Right lobe of liver (tissue), 6 donors: ENCODE measurements at regions of chr2 and their contacts with region 1.

Region 1: DNA sequence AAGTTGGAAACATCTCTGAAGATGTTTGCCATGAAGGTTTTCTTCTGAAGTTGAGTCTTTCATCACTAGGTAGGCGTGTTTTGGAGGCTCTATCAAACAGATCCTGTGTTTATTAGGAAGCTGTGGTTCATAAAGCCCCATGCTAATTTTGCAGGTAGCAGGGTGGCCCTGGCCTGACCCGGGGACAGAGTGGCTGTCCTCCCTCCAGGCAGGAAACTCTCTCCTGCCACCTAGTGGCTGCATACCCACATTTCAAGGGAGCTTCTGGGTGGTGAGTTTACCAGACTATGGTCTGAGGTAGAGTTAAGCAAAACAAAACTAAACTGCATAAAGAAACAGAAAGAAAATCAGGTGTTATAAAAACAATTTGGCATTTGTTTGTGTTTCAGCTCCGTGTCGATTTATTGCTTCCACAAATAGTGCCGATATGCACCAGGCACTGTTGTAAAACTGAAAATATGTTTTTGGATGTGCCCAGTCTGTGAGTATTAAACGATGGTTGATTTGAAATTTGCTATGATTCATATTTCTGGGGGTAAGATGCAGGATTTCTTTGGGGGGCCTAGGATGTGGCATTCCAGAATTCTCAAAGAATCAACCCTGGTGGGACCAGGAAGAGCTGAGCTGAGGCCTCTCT is 26.0 kb upstream of the IL37 start:
- DNase-seq: peak; percentile 69 to 82 (median 72)
- ATAC-seq: peak; percentile 98 to 99 (median 99)
- H3K4me3 ChIP-seq: no peak overlapping the region
- H3K27ac ChIP-seq: no peak overlapping the region
- H3K4me1 ChIP-seq: peaks cover 0 to 5% (median 0%) of the 10 kb centered on the region in 4 donors
- H3K27me3 ChIP-seq: no peaks in the 10 kb centered on the region
- CTCF ChIP-seq: peak; percentile 91 to 96 (median 94)
- POLR2A ChIP-seq: no peak

Region 2: DNA sequence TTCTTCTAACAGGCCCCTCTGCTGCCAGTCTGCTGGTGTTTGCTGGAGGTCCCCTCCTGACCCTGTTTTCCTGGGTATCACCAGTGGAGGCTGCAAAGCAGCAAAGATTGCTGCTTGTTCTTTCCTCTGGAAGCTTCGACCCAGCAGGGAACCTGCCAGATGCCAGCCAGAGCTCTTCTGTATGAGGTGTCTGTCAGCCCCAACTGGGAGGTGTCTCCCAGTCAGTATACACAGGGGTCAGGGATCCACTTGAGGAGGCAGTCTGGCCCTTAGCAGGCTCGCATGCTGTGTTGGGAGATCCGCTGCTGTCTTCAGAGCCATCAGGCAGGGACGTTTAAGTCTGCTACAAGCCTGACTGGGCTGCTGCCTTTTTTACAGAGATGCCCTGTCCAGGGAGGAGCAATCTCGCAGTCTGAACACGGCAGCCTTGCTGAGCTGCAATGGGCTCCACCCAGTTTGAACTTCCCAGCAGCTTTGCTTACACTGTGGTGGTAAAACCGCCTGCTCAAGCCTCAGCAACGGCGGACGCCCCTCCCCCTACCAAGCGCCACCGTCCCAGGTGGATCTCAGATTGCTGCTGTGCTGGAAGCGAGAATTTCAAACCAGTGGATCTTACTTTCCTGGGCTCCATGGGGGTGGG is 270.7 kb before region 1 on chr2:
- intact Hi-C with region 1: no loop called
- DNase-seq: no peak
- ATAC-seq: no peak
- H3K4me3 ChIP-seq: no peak overlapping the region
- H3K27ac ChIP-seq: no peak overlapping the region
- H3K4me1 ChIP-seq: peaks cover 0 to 8% (median 0%) of the 10 kb centered on the region in 4 donors
- H3K27me3 ChIP-seq: no peaks in the 10 kb centered on the region
- CTCF ChIP-seq: no peak
- POLR2A ChIP-seq: no peak

Region 3: GRCh38 chr2:112740527-112740926 is 144.5 kb before region 1 on chr2:
- intact Hi-C with region 1: loop called (anchors 5 to 10 kb)
- DNase-seq: no peak
- ATAC-seq: no peak
- H3K4me3 ChIP-seq: no peak overlapping the region
- H3K27ac ChIP-seq: no peak overlapping the region
- H3K4me1 ChIP-seq: no peaks in the 10 kb centered on the region
- H3K27me3 ChIP-seq: no peaks in the 10 kb centered on the region
- CTCF ChIP-seq: no peak
- POLR2A ChIP-seq: no peak

Region 4: GRCh38 chr2:112749755-112750559 is 135.0 kb before region 1 on chr2:
- intact Hi-C with region 1: loop called in 1 of 2 experiments (anchors 10 kb)
- DNase-seq: peak; percentile 85 to 89 (median 88)
- ATAC-seq: peak; percentile 92 to 97 (median 96)
- H3K4me3 ChIP-seq: no peak overlapping the region
- H3K27ac ChIP-seq: peak overlapping the region in 1 of 3 donors; percentile 71
- H3K4me1 ChIP-seq: peaks cover 0 to 34% (median 15%) of the 10 kb centered on the region in 4 donors
- H3K27me3 ChIP-seq: no peaks in the 10 kb centered on the region
- CTCF ChIP-seq: peak; percentile 93 to 96 (median 96)
- POLR2A ChIP-seq: no peak